Heart left ventricle (tissue), 16 donors: ENCODE measurements at regions of chr1 and their contacts with region 1.

Region 1: GRCh38 chr1:39132505-39133339 is 71.8 kb upstream of the MACF1 start:
- DNase-seq: peak; percentile 75 to 89 (median 81)
- ATAC-seq: peak; percentile 84 to 94 (median 88)
- H3K4me3 ChIP-seq: no peak overlapping the region
- H3K27ac ChIP-seq: peak overlapping the region; percentile 49 to 88 (median 70)
- H3K4me1 ChIP-seq: peaks cover 5 to 62% (median 49%) of the 10 kb centered on the region in 12 donors
- H3K27me3 ChIP-seq: no peaks in the 10 kb centered on the region
- CTCF ChIP-seq: peak in 10 of 12 donors; percentile 31 to 62 (median 49)
- POLR2A ChIP-seq: no peak

Region 2: DNA sequence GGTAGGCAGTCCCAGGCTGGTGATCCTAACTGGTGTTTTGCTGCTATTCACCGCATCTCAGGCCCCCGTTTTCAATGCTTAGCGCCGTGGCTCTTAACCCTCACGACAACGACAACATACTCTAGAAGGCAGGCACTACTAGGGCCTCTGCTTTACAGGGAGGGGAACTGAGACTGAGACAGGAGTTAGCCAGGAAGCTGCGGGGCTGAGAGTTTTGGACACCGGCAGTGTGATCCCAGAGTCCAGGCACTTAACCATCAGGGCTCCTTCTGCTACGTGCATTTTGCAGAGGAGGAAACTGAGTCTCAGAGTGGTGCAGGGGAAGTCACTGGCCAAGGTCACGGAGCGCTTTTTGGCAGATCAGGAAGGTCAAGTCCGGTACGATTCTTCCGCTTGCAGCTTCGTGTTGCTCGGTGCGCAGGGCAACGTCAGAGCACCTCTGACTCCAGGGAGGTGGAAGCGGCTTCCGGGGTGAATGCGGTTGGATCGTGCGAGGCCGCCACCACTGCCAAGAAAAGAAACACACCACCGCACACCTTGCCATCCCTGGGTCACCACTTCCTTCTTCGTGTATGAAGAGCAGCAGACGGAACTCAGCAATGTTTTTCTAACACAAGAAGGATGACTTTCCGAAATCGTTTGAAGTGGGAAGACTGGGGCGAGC is 573.4 kb before region 1 on chr1:
- intact Hi-C with region 1: no loop called
- DNase-seq: peak in 2 of 5 donors; percentile 25 to 71
- ATAC-seq: peak in 3 of 4 donors; percentile 20 to 46 (median 32)
- H3K4me3 ChIP-seq: peak overlapping the region in 5 of 12 donors; percentile 13 to 30 (median 18)
- H3K27ac ChIP-seq: no peak overlapping the region
- H3K4me1 ChIP-seq: peaks cover 0 to 14% (median 0%) of the 10 kb centered on the region in 12 donors
- H3K27me3 ChIP-seq: peaks cover 4 to 51% (median 8%) of the 10 kb centered on the region in 9 donors
- CTCF ChIP-seq: no peak
- POLR2A ChIP-seq: no peak

Region 3: GRCh38 chr1:39170731-39171667 is 38.3 kb after region 1 on chr1:
- intact Hi-C with region 1: loop called in 2 of 10 experiments (anchors 5 kb)
- DNase-seq: no peak
- ATAC-seq: no peak
- H3K4me3 ChIP-seq: no peak overlapping the region
- H3K27ac ChIP-seq: peak overlapping the region in 1 of 12 donors; percentile 70
- H3K4me1 ChIP-seq: peaks cover 0 to 66% (median 36%) of the 10 kb centered on the region in 12 donors
- H3K27me3 ChIP-seq: no peaks in the 10 kb centered on the region
- CTCF ChIP-seq: no peak
- POLR2A ChIP-seq: no peak

Region 4: DNA sequence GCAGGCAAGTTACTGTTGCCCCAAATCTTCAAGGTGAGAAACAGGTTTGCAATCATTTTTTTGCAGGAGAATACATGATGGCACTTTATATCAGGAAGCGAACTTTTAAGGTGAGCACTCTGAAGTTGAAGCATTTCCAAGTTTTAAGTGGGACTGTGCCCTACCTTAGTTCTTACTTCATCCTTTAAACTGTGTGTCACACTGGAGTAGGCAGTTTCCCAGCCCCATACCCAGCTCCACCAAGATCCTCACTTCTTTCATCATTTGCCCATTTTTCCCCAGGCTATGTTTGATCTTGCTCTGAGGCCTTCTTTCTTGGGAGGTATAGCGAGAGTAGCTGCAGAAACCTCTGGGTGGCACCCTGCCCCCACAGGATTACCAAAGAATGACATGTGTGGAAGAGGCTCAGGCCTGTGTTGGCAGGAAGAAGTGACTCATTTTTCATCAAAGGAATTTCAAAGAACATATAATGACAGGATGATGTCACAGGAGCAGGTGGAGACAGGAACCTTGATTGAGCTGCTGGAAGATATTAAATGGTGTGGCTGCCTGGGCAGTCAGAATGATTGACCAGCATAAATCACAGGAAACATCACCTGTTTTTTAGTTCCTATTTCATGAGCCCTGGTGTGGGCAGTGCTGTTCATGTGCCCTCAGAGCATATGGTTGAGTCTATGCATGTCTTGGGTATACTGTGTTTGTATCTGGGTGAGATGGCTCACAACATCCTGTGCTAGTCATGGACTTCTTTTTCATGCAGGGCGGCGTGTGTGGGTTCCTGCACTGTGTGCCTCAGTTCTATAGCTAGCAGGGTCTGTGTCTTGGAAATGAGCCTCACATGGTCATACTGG is 51.0 kb after region 1 on chr1:
- intact Hi-C with region 1: loop called in 2 of 10 experiments (anchors 10 kb)
- DNase-seq: peak in 4 of 5 donors; percentile 32 to 62 (median 34)
- ATAC-seq: peak; percentile 66 to 86 (median 77)
- H3K4me3 ChIP-seq: no peak overlapping the region
- H3K27ac ChIP-seq: peak overlapping the region in 5 of 12 donors; percentile 33 to 72 (median 43)
- H3K4me1 ChIP-seq: peaks cover 2 to 37% (median 25%) of the 10 kb centered on the region in 12 donors
- H3K27me3 ChIP-seq: no peaks in the 10 kb centered on the region
- CTCF ChIP-seq: peak in 11 of 12 donors; percentile 11 to 56 (median 37)
- POLR2A ChIP-seq: no peak

Region 5: GRCh38 chr1:39189592-39190041 is 56.9 kb after region 1 on chr1:
- intact Hi-C with region 1: loop called in 3 of 10 experiments (anchors 5 to 10 kb)
- DNase-seq: no peak
- ATAC-seq: no peak
- H3K4me3 ChIP-seq: no peak overlapping the region
- H3K27ac ChIP-seq: peak overlapping the region in 1 of 12 donors; percentile 91
- H3K4me1 ChIP-seq: peaks cover 0 to 58% (median 23%) of the 10 kb centered on the region in 12 donors
- H3K27me3 ChIP-seq: no peaks in the 10 kb centered on the region
- CTCF ChIP-seq: no peak
- POLR2A ChIP-seq: no peak